Naive thymus-derived CD4-positive, alpha-beta T cell (primary cell): ENCODE measurements at regions of chr6 and their contacts with region 1.

Region 1: GRCh38 chr6:89080542-89081422 is at the start of gene PNRC1:
- DNase-seq: peak; percentile 99 to 100 (median 100)
- ATAC-seq: peak; percentile 86
- H3K4me3 ChIP-seq: peak within 1 kb of the TSS; percentile 96
- H3K4me3 Mint-ChIP-seq: peak within 1 kb of the TSS; percentile 91 to 99 (median 98)
- H3K27ac ChIP-seq: peak within 1 kb of the TSS; percentile 100
- H3K27ac Mint-ChIP-seq: peak within 1 kb of the TSS; percentile 92 to 99 (median 98)
- H3K4me1 ChIP-seq: peaks cover 27 to 33% of the 10 kb centered on the region in 2 donors
- H3K4me1 Mint-ChIP-seq: peaks cover 31 to 54% (median 42%) of the 10 kb centered on the region in 7 donors
- H3K27me3 ChIP-seq: no peaks in the 10 kb centered on the region
- H3K27me3 Mint-ChIP-seq: peaks cover 0 to 4% (median 0%) of the 10 kb centered on the region in 5 donors
- total RNA-seq, gene PNRC1: 108 to 822 (median 763) TPM

Region 2: GRCh38 chr6:87407901-87408720 is 1672.7 kb before region 1 on chr6 and contains the start of gene CFAP206:
- CTCF ChIA-PET with region 1: no interaction called
- POLR2A ChIA-PET with region 1: no interaction called
- intact Hi-C with region 1: loop called (anchors 5 kb)
- DNase-seq: peak; percentile 75 to 87 (median 81)
- ATAC-seq: peak; percentile 91
- H3K4me3 ChIP-seq: peak within 1 kb of the TSS; percentile 98
- H3K4me3 Mint-ChIP-seq: peak within 1 kb of the TSS; percentile 76 to 94 (median 88)
- H3K27ac ChIP-seq: peak within 1 kb of the TSS; percentile 75
- H3K27ac Mint-ChIP-seq: peak within 1 kb of the TSS in 8 of 9 donors; percentile 21 to 91 (median 70)
- H3K4me1 ChIP-seq: peaks cover 0 to 5% of the 10 kb centered on the region in 2 donors
- H3K4me1 Mint-ChIP-seq: peaks cover 0 to 7% (median 5%) of the 10 kb centered on the region in 7 donors
- H3K27me3 ChIP-seq: no peaks in the 10 kb centered on the region
- H3K27me3 Mint-ChIP-seq: peaks cover 18 to 47% (median 23%) of the 10 kb centered on the region in 5 donors
- total RNA-seq, gene CFAP206: not detected

Region 3: DNA sequence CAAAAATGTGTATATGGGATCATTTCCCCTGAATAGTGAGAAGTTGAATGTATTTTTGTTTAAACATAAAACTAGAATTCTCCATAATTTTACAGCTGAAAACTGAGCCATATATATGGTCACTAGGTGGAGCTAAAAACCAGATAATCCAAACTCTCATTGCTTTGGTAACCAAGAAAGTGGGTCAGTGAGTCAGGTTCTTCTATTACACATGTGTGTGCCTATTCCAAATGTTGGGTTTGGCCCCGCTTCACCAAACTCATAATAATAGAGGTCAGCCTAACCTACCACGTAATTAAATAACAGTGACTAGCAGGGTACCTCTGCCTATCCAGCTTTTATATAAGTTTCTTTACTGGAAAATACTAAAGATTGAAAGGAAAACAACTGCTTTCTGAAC is 98.1 kb before region 1 on chr6:
- CTCF ChIA-PET with region 1: interaction called, 3 read pairs
- POLR2A ChIA-PET with region 1: interaction called, 19 read pairs
- intact Hi-C with region 1: loop called (anchors 1 kb)
- DNase-seq: peak in 7 of 9 donors; percentile 29 to 62 (median 55)
- ATAC-seq: peak; percentile 94
- H3K4me3 ChIP-seq: no peak overlapping the region
- H3K4me3 Mint-ChIP-seq: no peak overlapping the region
- H3K27ac ChIP-seq: no peak overlapping the region
- H3K27ac Mint-ChIP-seq: no peak overlapping the region
- H3K4me1 ChIP-seq: no peaks in the 10 kb centered on the region
- H3K4me1 Mint-ChIP-seq: peaks cover 0 to 7% (median 0%) of the 10 kb centered on the region in 7 donors
- H3K27me3 ChIP-seq: no peaks in the 10 kb centered on the region
- H3K27me3 Mint-ChIP-seq: peaks cover 0 to 23% (median 0%) of the 10 kb centered on the region in 5 donors

Region 4: GRCh38 chr6:89098461-89098860 is 17.7 kb after region 1 on chr6:
- CTCF ChIA-PET with region 1: no interaction called
- POLR2A ChIA-PET with region 1: interaction called, 6 read pairs
- intact Hi-C with region 1: loop called in 1 of 2 experiments (anchors 2 kb)
- DNase-seq: no peak
- ATAC-seq: no peak
- H3K4me3 ChIP-seq: no peak overlapping the region
- H3K4me3 Mint-ChIP-seq: no peak overlapping the region
- H3K27ac ChIP-seq: no peak overlapping the region
- H3K27ac Mint-ChIP-seq: no peak overlapping the region
- H3K4me1 ChIP-seq: no peaks in the 10 kb centered on the region
- H3K4me1 Mint-ChIP-seq: peaks cover 0 to 4% (median 0%) of the 10 kb centered on the region in 7 donors
- H3K27me3 ChIP-seq: no peaks in the 10 kb centered on the region
- H3K27me3 Mint-ChIP-seq: peaks cover 0 to 4% (median 0%) of the 10 kb centered on the region in 5 donors

Region 5: DNA sequence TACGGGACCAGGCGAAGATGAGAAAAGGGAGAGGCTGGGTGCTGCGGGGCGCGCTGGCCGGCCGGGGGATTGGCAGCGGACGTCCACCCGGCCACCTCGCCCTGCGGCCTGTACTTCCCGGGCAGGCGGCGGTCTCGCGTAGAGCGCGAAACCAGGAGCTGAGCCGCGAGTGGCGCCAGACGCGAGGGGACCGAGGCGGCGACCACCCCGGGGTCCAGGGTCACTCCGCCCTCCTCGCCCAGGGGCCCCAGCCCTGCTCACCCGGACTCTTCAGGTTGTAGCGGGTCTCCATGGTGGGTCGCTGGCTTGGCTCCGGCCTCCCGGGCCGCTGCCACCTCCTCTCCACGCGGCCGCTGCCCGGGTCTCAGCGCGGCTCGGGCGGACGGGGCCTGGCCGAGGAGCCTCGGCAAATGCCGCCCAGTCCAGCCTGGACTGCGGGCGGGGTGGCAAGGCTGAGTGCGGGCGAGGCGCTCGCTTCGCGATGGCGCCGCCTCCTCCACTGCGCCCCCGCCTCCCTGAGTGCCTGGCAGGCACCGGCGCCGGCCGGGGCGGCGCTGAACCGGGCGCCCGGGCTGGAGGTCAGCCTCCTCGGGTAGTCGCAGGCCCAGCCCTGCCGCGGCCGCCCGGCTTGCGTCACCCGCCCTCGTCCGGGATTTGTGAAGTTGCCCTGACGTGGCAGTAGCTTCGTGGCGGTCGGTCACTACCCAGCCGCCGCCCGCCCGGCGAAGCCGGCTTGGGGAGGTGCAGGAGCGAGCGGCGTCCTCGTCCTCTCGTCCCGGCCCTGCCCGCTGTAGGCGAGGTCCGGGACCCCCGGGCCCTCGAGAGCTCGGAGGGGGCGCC is 271.7 kb after region 1 on chr6 and contains the start of gene UBE2J1:
- CTCF ChIA-PET with region 1: interaction called, 6 read pairs
- POLR2A ChIA-PET with region 1: interaction called, 90 read pairs
- intact Hi-C with region 1: loop called (anchors 1 kb)
- DNase-seq: peak; percentile 34 to 87 (median 61)
- ATAC-seq: peak; percentile 89
- H3K4me3 ChIP-seq: peak within 1 kb of the TSS; percentile 67
- H3K4me3 Mint-ChIP-seq: peak within 1 kb of the TSS; percentile 96 to 100 (median 98)
- H3K27ac ChIP-seq: peak within 1 kb of the TSS; percentile 88
- H3K27ac Mint-ChIP-seq: peak within 1 kb of the TSS; percentile 95 to 98 (median 97)
- H3K4me1 ChIP-seq: peaks cover 27 to 30% of the 10 kb centered on the region in 2 donors
- H3K4me1 Mint-ChIP-seq: peaks cover 44 to 81% (median 72%) of the 10 kb centered on the region in 7 donors
- H3K27me3 ChIP-seq: no peaks in the 10 kb centered on the region
- H3K27me3 Mint-ChIP-seq: no peaks in the 10 kb centered on the region
- total RNA-seq, gene UBE2J1: 18.8 to 47.7 (median 27.7) TPM

Region 6: DNA sequence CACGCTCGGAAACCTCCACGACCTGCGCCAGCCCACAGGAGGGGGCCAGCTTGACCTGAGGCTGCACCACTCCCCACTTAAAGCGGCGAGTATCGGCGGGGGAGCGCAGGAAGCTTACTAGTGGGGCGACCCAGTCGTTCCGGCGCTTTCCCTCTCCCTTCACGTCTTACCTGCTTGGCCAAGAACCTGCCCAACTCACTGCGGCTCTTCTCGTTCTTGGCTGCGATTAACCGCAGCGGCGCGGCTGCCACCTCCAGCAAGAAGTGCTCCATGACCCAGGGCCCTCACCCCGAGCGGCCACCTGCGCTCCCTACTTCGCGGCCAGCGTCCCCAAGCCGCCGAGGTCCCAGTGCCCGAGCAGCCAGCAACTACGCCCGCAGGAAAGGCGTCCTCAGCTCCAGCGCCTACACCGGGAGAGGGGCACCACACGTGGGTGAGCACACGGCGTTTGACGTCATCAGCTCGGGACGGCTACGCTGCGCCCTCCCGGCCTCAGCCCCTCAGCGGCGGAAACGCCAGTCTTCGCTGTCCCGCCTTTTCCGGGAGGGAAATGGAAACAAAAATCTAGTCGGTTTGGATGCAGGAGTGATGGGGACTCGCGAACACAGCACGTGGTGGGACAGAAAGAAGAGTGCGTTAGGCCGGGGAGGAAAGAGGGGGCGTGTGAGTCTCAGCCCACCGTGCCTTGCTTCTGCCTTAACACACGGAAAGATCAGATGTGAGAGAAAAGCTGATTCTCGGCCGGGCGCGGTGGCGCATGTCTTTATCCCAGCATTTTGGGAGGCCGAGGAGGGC is 738.8 kb after region 1 on chr6 and contains the start of gene MDN1:
- CTCF ChIA-PET with region 1: no interaction called
- POLR2A ChIA-PET with region 1: no interaction called
- intact Hi-C with region 1: loop called (anchors 1 to 2 kb)
- DNase-seq: peak; percentile 60 to 89 (median 87)
- ATAC-seq: peak; percentile 96
- H3K4me3 ChIP-seq: peak within 1 kb of the TSS; percentile 66
- H3K4me3 Mint-ChIP-seq: peak within 1 kb of the TSS; percentile 92 to 97 (median 96)
- H3K27ac ChIP-seq: peak within 1 kb of the TSS; percentile 75
- H3K27ac Mint-ChIP-seq: peak within 1 kb of the TSS; percentile 92 to 98 (median 96)
- H3K4me1 ChIP-seq: peaks cover 12 to 19% of the 10 kb centered on the region in 2 donors
- H3K4me1 Mint-ChIP-seq: peaks cover 16 to 49% (median 36%) of the 10 kb centered on the region in 7 donors
- H3K27me3 ChIP-seq: no peaks in the 10 kb centered on the region
- H3K27me3 Mint-ChIP-seq: no peaks in the 10 kb centered on the region
- total RNA-seq, gene MDN1: 54.9 to 66.1 (median 63.0) TPM

Region 7: GRCh38 chr6:90885611-90886056 is 1804.9 kb after region 1 on chr6:
- CTCF ChIA-PET with region 1: no interaction called
- POLR2A ChIA-PET with region 1: no interaction called
- intact Hi-C with region 1: no loop called
- DNase-seq: no peak
- ATAC-seq: no peak
- H3K4me3 ChIP-seq: no peak overlapping the region
- H3K4me3 Mint-ChIP-seq: no peak overlapping the region
- H3K27ac ChIP-seq: no peak overlapping the region
- H3K27ac Mint-ChIP-seq: no peak overlapping the region
- H3K4me1 ChIP-seq: no peaks in the 10 kb centered on the region
- H3K4me1 Mint-ChIP-seq: no peaks in the 10 kb centered on the region
- H3K27me3 ChIP-seq: no peaks in the 10 kb centered on the region
- H3K27me3 Mint-ChIP-seq: peaks cover 3 to 30% (median 13%) of the 10 kb centered on the region in 5 donors